ENCODE measurements at regions of chr19 and their contacts with region 1.

Region 1: DNA sequence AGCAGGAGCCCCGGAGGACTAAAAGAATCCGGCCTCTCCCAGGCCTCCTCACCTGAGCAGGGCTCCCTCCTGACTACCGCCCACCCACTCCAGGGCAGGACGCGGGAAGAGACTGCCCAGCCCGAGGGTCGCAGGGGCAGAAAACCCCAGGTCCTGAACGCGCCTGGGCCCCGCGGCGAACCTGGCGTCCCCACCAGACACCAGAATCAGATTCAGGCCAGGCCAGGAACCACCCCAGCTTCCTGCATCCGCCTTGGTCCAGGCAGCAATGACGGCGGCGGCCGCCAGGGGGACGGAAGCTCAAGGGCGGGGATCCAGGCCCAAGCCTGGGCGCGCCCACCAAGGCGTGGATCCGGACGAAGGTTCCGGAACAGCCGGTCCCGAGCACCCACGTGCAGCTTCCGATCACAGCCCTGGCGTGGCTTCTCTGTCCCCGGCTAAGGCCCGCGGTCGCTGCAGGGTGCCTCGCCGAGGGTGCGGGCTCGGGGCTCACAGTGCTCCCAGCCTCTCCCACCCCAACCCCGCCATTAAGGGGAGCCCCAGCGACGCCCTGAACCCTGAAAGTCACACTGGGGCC is 3.6 kb downstream of the LGALS7 start:
- DNase-seq: peak; percentile 77 to 85
- ATAC-seq: peak; percentile 67 to 89
- H3K4me3 ChIP-seq: no peak overlapping the region
- H3K27ac ChIP-seq: peak overlapping the region; percentile 28 to 62; a peak in 4 of 6 replicates
- H3K4me1 ChIP-seq: no peaks in the 10 kb centered on the region; the same call in 2 of the 3 replicates
- CTCF ChIP-seq: peak; percentile 61
- EP300 ChIP-seq: no peak
- POLR2A ChIP-seq: no peak; the same call in 1 of the 2 replicates
- RAD21 ChIP-seq: peak; percentile 64 to 71

Region 2: DNA sequence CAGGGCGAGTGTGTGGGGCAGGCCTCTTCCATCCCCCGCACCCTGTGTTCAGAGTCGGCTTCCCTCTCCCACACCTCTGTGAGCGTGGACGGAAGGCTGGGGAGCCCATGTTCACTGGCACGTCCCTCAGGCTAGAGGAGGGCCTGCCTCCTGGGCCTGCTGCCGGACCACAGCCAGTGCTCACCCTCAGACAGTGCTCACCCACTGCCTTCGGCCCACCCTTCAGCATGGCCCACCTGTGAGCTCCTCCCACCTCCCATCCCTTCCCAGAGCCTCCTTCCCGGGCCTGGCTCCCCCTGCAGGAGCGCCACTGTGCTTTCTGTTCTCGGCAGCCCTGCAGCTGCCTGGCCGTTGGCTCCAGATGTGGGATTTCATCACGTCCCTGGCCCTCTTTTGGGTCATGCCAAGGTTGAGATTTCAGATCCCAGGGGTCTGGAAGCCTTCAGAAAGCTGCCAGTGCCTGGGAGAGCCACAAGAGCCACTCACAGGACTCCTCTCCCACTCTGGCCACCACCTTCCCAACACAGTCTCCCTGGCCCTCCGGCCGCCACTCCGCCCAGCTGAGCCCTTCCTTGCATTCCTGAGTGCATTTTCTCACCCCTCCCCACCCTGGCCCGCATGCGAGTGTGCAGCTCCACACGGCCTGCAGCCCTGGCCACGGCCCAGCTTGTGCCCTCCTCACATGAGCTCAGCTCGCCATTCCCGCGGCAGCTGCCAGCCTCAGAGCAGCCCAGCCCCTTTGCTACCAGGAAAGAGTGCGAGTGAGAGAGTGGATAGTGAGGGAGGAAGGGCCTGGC is 50.8 kb before region 1 on chr19:
- CTCF ChIA-PET with region 1: no interaction called
- POLR2A ChIA-PET with region 1: no interaction called
- DNase-seq: peak in 1 of 2 experiments; percentile 61
- ATAC-seq: peak; percentile 30 to 52
- H3K4me3 ChIP-seq: no peak overlapping the region
- H3K27ac ChIP-seq: peak overlapping the region; percentile 32 to 66; a peak in 4 of 6 replicates
- H3K4me1 ChIP-seq: peaks cover 33% of the 10 kb centered on the region
- CTCF ChIP-seq: peak; percentile 38; the same call in 2 of the 3 replicates
- EP300 ChIP-seq: no peak
- POLR2A ChIP-seq: no peak
- RAD21 ChIP-seq: peak; percentile 20 to 35; a peak in 4 of 5 replicates

Region 3: GRCh38 chr19:38759590-38760003 is 10.1 kb before region 1 on chr19:
- CTCF ChIA-PET with region 1: interaction called, 17 read pairs
- POLR2A ChIA-PET with region 1: no interaction called
- DNase-seq: no peak
- ATAC-seq: peak in 1 of 2 experiments; percentile 24; a peak in 1 of 6 replicates
- H3K4me3 ChIP-seq: no peak overlapping the region
- H3K27ac ChIP-seq: 0 out of 6 replicates have a peak overlapping the region, but pooled peaks of 1 of the 2 experiments have one; percentile 4
- H3K4me1 ChIP-seq: peaks cover 16% of the 10 kb centered on the region
- CTCF ChIP-seq: no peak
- EP300 ChIP-seq: no peak
- POLR2A ChIP-seq: no peak
- RAD21 ChIP-seq: no peak

Region 4: GRCh38 chr19:38784224-38784623 is 14.5 kb after region 1 on chr19:
- CTCF ChIA-PET with region 1: interaction called, 22 read pairs
- POLR2A ChIA-PET with region 1: no interaction called
- DNase-seq: peak; percentile 80 to 81
- ATAC-seq: peak; percentile 61; a peak in 4 of 6 replicates
- H3K4me3 ChIP-seq: no peak overlapping the region
- H3K27ac ChIP-seq: peak overlapping the region; percentile 22 to 59
- H3K4me1 ChIP-seq: peaks cover 19% of the 10 kb centered on the region
- CTCF ChIP-seq: no peak
- EP300 ChIP-seq: no peak
- POLR2A ChIP-seq: no peak
- RAD21 ChIP-seq: no peak

Region 5: DNA sequence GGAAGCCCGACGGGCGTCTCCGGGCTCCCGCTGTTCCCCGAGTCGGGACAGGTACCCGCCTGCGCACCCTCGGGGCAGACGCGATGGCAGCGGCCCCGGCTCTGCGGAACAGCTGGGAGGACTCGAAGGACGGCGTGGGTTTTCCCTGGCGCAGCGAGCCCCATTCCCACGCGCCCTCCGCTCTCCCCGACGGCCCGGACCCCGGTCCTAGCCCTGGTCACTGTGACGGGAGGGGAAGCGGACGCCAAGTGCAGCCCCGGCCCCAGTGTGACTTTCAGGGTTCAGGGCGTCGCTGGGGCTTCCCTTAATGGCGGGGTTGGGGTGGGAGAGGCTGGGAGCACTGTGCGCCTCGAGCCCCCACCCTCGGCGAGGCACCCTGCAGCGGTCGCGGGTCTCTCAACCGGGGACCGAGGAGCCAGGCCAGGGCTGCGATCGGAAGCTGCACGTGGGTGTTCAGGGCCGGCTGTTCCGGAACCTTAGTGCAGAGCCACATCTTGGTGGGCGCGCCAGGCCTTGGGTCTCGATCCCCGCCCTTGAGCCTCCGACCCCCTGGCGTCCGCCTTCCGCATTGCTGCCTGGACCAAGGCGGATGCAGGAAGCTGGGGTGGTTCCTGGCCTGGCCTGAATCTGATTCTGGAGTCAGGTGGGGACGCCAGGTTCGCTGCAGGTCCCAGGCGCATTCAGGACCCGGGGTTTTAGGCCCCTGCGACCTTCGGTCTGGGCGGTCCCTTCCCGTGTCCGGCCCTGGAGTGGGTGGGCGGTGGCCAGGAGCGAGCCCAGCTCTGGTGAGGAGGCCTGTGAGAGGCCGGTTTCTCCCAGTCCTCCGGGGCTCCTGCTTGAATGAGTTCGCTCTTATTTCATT is 22.8 kb after region 1 on chr19:
- CTCF ChIA-PET with region 1: interaction called, 22 read pairs
- POLR2A ChIA-PET with region 1: interaction called, 3 read pairs
- DNase-seq: no peak
- ATAC-seq: peak in 1 of 2 experiments; percentile 13; a peak in 2 of 6 replicates
- H3K4me3 ChIP-seq: no peak overlapping the region
- H3K27ac ChIP-seq: peak overlapping the region in 1 of 2 experiments; percentile 54; a peak in 3 of 6 replicates
- H3K4me1 ChIP-seq: peaks cover 11% of the 10 kb centered on the region
- CTCF ChIP-seq: no peak
- EP300 ChIP-seq: no peak
- POLR2A ChIP-seq: no peak
- RAD21 ChIP-seq: no peak

Region 6: GRCh38 chr19:38799071-38799744 is 29.5 kb after region 1 on chr19:
- CTCF ChIA-PET with region 1: interaction called, 12 read pairs
- POLR2A ChIA-PET with region 1: interaction called, 3 read pairs
- DNase-seq: no peak
- ATAC-seq: no peak; a peak in 2 of 6 replicates
- H3K4me3 ChIP-seq: no peak overlapping the region
- H3K27ac ChIP-seq: peak overlapping the region; percentile 79 to 81
- H3K4me1 ChIP-seq: peaks cover 18% of the 10 kb centered on the region
- CTCF ChIP-seq: no peak
- EP300 ChIP-seq: no peak
- POLR2A ChIP-seq: no peak
- RAD21 ChIP-seq: no peak

Region 7: GRCh38 chr19:38904581-38905539 is 135.1 kb after region 1 on chr19:
- CTCF ChIA-PET with region 1: no interaction called
- POLR2A ChIA-PET with region 1: no interaction called
- DNase-seq: no peak
- ATAC-seq: peak in 1 of 2 experiments; percentile 4; a peak in 1 of 6 replicates
- H3K4me3 ChIP-seq: no peak overlapping the region
- H3K27ac ChIP-seq: 0 out of 6 replicates have a peak overlapping the region, but pooled peaks of 1 of the 2 experiments have one; percentile 8
- H3K4me1 ChIP-seq: peaks cover 16% of the 10 kb centered on the region
- CTCF ChIP-seq: no peak
- EP300 ChIP-seq: no peak
- POLR2A ChIP-seq: no peak
- RAD21 ChIP-seq: no peak

Measured in A549 (cell line).